Testis (tissue), 5 donors: ENCODE measurements at regions of chr6 and their contacts with region 1.

Region 1: GRCh38 chr6:170199716-170200115 is 91.2 kb downstream of the DLL1 start:
- DNase-seq: no peak
- H3K4me3 ChIP-seq: no peak overlapping the region
- H3K27ac ChIP-seq: no peak overlapping the region
- H3K4me1 ChIP-seq: no peaks in the 10 kb centered on the region
- H3K27me3 ChIP-seq: no peaks in the 10 kb centered on the region
- CTCF ChIP-seq: no peak
- POLR2A ChIP-seq: no peak

Region 2: DNA sequence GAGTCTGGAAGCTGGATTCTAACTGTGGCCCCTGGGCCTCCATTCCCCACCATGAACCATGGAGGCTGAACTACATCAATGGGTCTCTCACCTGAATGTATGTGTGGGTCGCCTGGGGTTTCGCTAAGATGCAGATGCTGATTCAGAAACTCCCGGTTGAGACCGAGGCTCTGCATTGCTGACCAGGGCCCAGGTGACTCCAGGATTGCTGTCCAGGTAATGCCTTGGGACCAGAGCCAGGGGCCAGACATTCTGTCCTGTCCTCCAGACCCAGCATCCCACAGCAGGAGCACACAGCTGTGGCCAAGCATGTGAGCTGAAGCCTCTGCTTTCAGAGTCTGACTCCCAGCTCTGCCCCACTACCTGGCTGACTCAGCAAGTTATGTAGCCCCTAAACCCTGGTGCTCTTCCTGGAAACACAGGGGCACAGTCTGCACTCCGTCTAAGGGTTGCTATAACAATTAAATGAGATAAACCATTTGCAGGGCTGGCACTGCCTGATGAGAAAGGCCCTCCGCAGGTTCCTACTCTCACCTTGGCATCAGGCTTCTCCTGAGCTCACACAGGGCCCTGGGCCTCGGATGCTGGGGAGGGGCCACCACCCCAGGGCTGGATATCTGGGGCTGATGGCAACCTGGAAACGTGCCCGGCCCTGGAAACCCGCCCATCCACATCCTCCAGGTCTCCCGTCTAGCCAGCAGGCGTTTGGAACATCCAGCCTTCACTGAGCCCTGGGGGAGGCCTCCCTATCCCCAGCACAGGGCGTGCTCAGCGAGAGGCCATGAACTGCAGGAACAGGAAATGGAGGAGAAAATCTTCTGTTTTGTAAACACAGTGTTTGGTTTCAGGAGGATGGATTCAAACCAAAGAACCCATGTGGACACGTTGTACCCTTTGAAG is 84.5 kb before region 1 on chr6:
- intact Hi-C with region 1: no loop called
- DNase-seq: peak; percentile 74
- H3K4me3 ChIP-seq: no peak overlapping the region
- H3K27ac ChIP-seq: peak overlapping the region in 1 of 2 donors; percentile 5
- H3K4me1 ChIP-seq: peaks cover 12% of the 10 kb centered on the region
- H3K27me3 ChIP-seq: no peaks in the 10 kb centered on the region
- CTCF ChIP-seq: no peak
- POLR2A ChIP-seq: no peak

Region 3: DNA sequence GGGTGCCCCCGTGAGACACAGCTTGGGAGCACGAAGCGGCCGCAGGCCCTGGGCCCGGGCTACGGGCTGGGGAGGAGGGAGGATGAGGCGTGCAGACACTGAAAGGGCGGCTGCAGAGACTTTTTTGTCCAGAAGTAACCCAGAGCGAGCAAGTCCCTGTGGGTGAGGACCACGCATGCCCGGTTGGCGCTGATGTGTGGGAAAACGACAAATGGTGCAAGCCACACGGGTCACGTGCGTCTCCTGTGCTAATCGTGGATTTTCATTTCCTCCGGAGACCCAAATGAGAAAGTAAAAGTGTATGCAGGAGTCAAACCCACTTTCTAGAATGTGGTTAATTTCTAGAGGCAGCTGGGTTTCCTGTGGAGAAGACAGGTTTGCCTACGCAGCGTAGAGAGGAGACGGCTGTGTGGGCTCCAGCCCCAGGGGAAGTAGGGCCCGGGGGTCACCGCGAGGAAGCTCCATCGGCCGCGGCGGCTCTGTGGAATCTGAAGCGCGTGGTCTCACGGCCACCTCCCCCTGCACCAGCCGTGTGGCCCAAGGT is 72.1 kb after region 1 on chr6:
- intact Hi-C with region 1: no loop called
- DNase-seq: no peak
- H3K4me3 ChIP-seq: no peak overlapping the region
- H3K27ac ChIP-seq: no peak overlapping the region
- H3K4me1 ChIP-seq: peaks cover 8% of the 10 kb centered on the region
- H3K27me3 ChIP-seq: no peaks in the 10 kb centered on the region
- CTCF ChIP-seq: no peak
- POLR2A ChIP-seq: no peak

Region 4: DNA sequence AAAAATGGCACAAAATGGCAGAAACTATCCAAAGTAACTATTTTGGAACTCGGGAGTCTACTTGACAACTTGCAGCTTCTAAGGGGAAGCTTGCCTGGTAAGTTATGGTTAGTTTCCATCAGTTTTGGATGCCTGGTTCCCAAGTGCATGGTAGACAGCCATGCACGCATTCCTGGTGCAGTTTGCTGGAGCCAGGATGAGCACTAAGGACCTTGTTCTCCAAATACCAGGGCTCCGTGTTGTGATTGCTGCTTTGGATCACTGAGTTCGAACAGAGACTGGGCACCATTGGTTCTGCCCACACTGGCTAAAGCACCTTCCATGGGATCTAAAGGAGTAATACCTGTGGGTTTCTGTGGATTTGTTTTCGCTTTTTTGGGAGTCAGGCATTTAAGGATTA is 210.5 kb after region 1 on chr6:
- intact Hi-C with region 1: loop called (anchors 5 kb)
- DNase-seq: no peak
- H3K4me3 ChIP-seq: no peak overlapping the region
- H3K27ac ChIP-seq: no peak overlapping the region
- H3K4me1 ChIP-seq: no peaks in the 10 kb centered on the region
- H3K27me3 ChIP-seq: no peaks in the 10 kb centered on the region
- CTCF ChIP-seq: no peak
- POLR2A ChIP-seq: no peak